K562 (cell line): ENCODE measurements at regions of chr6 and their contacts with region 1.

Region 1: GRCh38 chr6:126217497-126217896 is 122.4 kb upstream of the CENPW start:
- DNase-seq: no peak
- ATAC-seq: no peak
- H3K4me3 ChIP-seq: no peak overlapping the region
- H3K27ac ChIP-seq: no peak overlapping the region
- H3K4me1 ChIP-seq: no peaks in the 10 kb centered on the region
- H3K27me3 ChIP-seq: no peaks in the 10 kb centered on the region
- CTCF ChIP-seq: no peak
- EP300 ChIP-seq: no peak
- POLR2A ChIP-seq: no peak
- RAD21 ChIP-seq: no peak

Region 2: GRCh38 chr6:125956506-125957390 is 260.7 kb before region 1 on chr6 and contains the start of gene HINT3:
- CTCF ChIA-PET with region 1: no interaction called
- POLR2A ChIA-PET with region 1: no interaction called
- in situ Hi-C with region 1: no loop called
- intact Hi-C with region 1: no loop called
- DNase-seq: peak; percentile 84 to 100 (median 88)
- ATAC-seq: peak; percentile 86
- H3K4me3 ChIP-seq: peak within 1 kb of the TSS; percentile 86
- H3K27ac ChIP-seq: peak within 1 kb of the TSS; percentile 89
- H3K4me1 ChIP-seq: peaks cover 30 to 34% of the 10 kb centered on the region in 2 experiments; a peak in 4 of 5 replicates
- H3K27me3 ChIP-seq: no peaks in the 10 kb centered on the region
- CTCF ChIP-seq: peak; percentile 98 to 99 (median 99)
- EP300 ChIP-seq: peak; percentile 76
- POLR2A ChIP-seq: peak; percentile 75
- RAD21 ChIP-seq: peak; percentile 98
- polyA plus RNA-seq, gene HINT3: 1.4 to 1.9 TPM

Region 3: DNA sequence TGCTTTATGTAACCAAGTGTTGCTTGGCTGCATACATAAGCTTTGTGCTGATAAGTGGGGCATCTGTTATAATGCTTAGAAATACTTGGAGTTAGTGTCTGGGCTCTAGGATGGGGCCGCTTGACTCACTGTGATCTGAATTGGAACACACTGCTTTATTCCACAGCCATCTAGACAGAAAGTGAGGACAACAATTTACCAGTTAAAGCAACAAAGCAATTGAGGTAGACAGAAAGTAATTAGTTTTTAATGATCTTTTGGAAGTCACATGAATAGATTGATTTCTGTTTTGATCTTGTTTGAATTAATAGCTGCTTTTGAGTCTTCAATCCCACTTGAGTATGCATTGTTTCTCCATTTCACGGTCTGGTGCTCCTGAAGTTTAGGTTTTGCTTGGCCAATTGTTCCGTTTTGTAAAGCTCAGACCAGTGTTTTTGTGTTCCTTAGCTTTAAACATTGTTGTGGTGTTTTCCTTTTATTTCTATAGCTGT is 73.7 kb before region 1 on chr6:
- CTCF ChIA-PET with region 1: no interaction called
- POLR2A ChIA-PET with region 1: no interaction called
- in situ Hi-C with region 1: no loop called
- intact Hi-C with region 1: no loop called
- DNase-seq: no peak
- ATAC-seq: peak; percentile 59
- H3K4me3 ChIP-seq: no peak overlapping the region
- H3K27ac ChIP-seq: no peak overlapping the region
- H3K4me1 ChIP-seq: no peaks in the 10 kb centered on the region
- H3K27me3 ChIP-seq: no peaks in the 10 kb centered on the region
- CTCF ChIP-seq: no peak
- EP300 ChIP-seq: no peak
- POLR2A ChIP-seq: no peak
- RAD21 ChIP-seq: no peak

Region 4: GRCh38 chr6:126170978-126171382 is 46.5 kb before region 1 on chr6:
- CTCF ChIA-PET with region 1: no interaction called
- POLR2A ChIA-PET with region 1: no interaction called
- in situ Hi-C with region 1: no loop called
- intact Hi-C with region 1: no loop called
- DNase-seq: peak in 2 of 4 experiments; percentile 51 to 76
- ATAC-seq: peak; percentile 91
- H3K4me3 ChIP-seq: no peak overlapping the region
- H3K27ac ChIP-seq: no peak overlapping the region
- H3K4me1 ChIP-seq: peaks cover 0 to 11% of the 10 kb centered on the region in 2 experiments; a peak in 2 of 5 replicates
- H3K27me3 ChIP-seq: no peaks in the 10 kb centered on the region
- CTCF ChIP-seq: peak; percentile 49 to 71 (median 70); a peak in 5 of 6 replicates
- EP300 ChIP-seq: no peak
- POLR2A ChIP-seq: no peak
- RAD21 ChIP-seq: peak; percentile 63 to 75

Region 5: DNA sequence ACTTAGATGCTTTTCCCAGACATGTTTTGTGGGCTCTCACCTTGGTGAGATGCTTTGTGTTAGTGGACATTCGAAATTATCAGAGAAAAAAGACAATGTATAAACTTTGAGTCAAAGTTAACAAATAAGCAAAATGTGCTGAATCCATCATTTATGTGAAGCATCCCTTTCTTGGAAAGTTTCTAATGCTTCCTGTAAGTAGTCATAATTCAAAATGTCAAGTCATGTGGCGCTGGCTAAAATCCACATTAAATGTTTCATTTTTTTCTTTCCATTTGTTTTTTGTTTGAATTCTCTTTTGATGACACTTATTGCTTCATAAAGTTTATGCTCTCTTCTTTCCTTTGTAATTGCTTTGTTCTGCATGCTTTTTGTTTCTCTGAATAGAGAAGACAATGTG is 15.2 kb after region 1 on chr6:
- CTCF ChIA-PET with region 1: no interaction called
- POLR2A ChIA-PET with region 1: no interaction called
- in situ Hi-C with region 1: no loop called
- intact Hi-C with region 1: no loop called
- DNase-seq: no peak
- ATAC-seq: no peak
- H3K4me3 ChIP-seq: no peak overlapping the region
- H3K27ac ChIP-seq: no peak overlapping the region
- H3K4me1 ChIP-seq: peaks cover 0 to 3% of the 10 kb centered on the region in 2 experiments; a peak in 2 of 5 replicates
- H3K27me3 ChIP-seq: no peaks in the 10 kb centered on the region
- CTCF ChIP-seq: no peak
- EP300 ChIP-seq: no peak
- POLR2A ChIP-seq: no peak
- RAD21 ChIP-seq: no peak

Region 6: GRCh38 chr6:126280287-126280686 is 62.8 kb after region 1 on chr6:
- CTCF ChIA-PET with region 1: no interaction called
- POLR2A ChIA-PET with region 1: no interaction called
- in situ Hi-C with region 1: loop called (anchors 5 kb)
- intact Hi-C with region 1: no loop called
- DNase-seq: peak in 1 of 4 experiments; percentile 4
- ATAC-seq: no peak
- H3K4me3 ChIP-seq: no peak overlapping the region
- H3K27ac ChIP-seq: no peak overlapping the region
- H3K4me1 ChIP-seq: no peaks in the 10 kb centered on the region
- H3K27me3 ChIP-seq: no peaks in the 10 kb centered on the region
- CTCF ChIP-seq: no peak
- EP300 ChIP-seq: no peak
- POLR2A ChIP-seq: no peak
- RAD21 ChIP-seq: no peak